Vagina (tissue), 2 donors: ENCODE measurements at regions of chr1 and their contacts with region 1.

Region 1: GRCh38 chr1:184254849-184255248 is 132.0 kb upstream of the C1orf21 start:
- DNase-seq: no peak
- H3K4me3 ChIP-seq: no peak overlapping the region
- H3K27ac ChIP-seq: no peak overlapping the region
- H3K4me1 ChIP-seq: no peaks in the 10 kb centered on the region
- H3K27me3 ChIP-seq: no peaks in the 10 kb centered on the region
- CTCF ChIP-seq: no peak
- POLR2A ChIP-seq: no peak

Region 2: GRCh38 chr1:183544598-183545297 is 710.1 kb before region 1 on chr1:
- intact Hi-C with region 1: loop called (anchors 5 kb)
- DNase-seq: no peak
- H3K4me3 ChIP-seq: no peak overlapping the region
- H3K27ac ChIP-seq: no peak overlapping the region
- H3K4me1 ChIP-seq: no peaks in the 10 kb centered on the region
- H3K27me3 ChIP-seq: no peaks in the 10 kb centered on the region
- CTCF ChIP-seq: no peak
- POLR2A ChIP-seq: no peak

Region 3: DNA sequence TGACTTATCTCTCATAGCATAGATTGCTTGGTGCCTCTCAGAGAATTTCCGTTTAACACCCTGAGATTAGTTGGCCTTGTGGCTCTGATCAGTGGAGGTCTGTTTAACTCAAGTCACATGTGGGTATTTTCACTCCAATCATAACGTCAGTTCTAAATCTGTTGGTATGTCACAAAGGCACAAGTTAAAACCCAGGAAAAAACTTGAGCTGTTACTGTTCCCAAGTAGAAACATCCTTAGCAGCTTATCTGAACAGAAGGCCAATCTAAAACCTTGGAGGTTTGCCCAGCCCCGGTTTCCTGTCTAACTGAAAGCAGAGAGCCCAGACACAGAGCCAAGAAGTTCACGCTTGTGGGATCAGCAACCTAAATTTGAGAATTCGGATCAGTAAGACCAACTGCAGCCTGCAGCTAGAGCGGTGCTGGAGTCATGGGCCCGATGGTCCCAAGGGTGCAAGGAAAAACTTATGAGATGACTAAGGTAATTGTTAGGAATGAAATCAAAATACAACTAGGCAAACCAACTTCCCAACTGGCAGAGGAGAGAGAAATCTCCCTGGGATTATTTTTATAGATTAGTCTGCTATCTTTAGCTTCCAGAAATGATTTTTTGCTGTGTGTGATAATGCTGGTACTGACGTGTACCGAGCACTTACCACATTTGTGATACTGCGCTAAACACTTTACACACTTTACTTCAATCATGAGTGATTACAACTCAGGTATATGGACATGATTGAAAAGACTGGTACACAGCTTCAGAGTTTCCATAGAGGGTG is 41.8 kb after region 1 on chr1:
- intact Hi-C with region 1: no loop called
- DNase-seq: no peak
- H3K4me3 ChIP-seq: no peak overlapping the region
- H3K27ac ChIP-seq: peak overlapping the region; percentile 71
- H3K4me1 ChIP-seq: peaks cover 25% of the 10 kb centered on the region
- H3K27me3 ChIP-seq: no peaks in the 10 kb centered on the region
- CTCF ChIP-seq: no peak
- POLR2A ChIP-seq: no peak